Heart left ventricle (tissue), 16 donors: ENCODE measurements at regions of chr16 and their contacts with region 1.

Region 1: DNA sequence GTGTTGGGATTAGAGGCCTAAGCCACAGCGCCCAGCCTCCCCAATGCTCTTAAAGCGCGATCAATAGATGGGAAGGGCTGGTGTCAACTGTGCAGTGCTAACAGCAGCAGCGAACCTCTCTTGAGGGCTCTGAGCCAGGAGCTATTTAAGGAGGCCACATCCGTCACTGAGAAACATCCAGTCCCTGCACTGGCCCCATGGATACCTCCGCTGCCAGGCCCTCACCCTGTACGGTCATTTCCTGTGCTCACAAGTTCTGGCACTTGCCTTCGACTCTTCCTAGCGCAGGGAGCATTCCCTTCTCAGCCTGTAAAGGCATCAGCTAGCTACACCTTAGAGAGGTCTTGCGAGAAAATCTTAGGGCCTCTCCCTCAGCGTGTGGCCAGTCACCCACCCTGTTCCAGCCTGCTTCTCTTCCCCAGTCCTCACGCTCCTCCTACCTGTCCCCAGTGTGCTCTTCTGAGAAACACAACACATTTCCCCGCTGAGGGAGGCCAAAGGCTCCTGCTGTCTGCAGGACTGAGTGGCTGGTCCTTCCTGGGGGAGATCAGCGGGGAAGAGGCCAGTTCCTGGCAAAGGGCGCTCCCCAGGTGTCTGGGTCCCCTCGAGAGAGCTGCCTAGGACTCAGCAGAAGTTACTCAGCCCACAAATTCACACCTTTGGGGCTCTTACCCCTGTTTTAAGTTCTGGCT is 28.6 kb downstream of the GTF3C1 start:
- DNase-seq: peak; percentile 78 to 93 (median 87)
- ATAC-seq: peak; percentile 91 to 94 (median 93)
- H3K4me3 ChIP-seq: no peak overlapping the region
- H3K27ac ChIP-seq: peak overlapping the region; percentile 71 to 97 (median 94)
- H3K4me1 ChIP-seq: peaks cover 0 to 52% (median 27%) of the 10 kb centered on the region in 12 donors
- H3K27me3 ChIP-seq: no peaks in the 10 kb centered on the region
- CTCF ChIP-seq: no peak
- POLR2A ChIP-seq: peak in 1 of 2 donors; percentile 80

Region 2: GRCh38 chr16:27495191-27495590 is 25.9 kb before region 1 on chr16:
- intact Hi-C with region 1: no loop called
- DNase-seq: peak in 1 of 5 donors; percentile 45
- ATAC-seq: no peak
- H3K4me3 ChIP-seq: no peak overlapping the region
- H3K27ac ChIP-seq: no peak overlapping the region
- H3K4me1 ChIP-seq: peaks cover 0 to 21% (median 4%) of the 10 kb centered on the region in 12 donors
- H3K27me3 ChIP-seq: no peaks in the 10 kb centered on the region
- CTCF ChIP-seq: no peak
- POLR2A ChIP-seq: no peak

Region 3: DNA sequence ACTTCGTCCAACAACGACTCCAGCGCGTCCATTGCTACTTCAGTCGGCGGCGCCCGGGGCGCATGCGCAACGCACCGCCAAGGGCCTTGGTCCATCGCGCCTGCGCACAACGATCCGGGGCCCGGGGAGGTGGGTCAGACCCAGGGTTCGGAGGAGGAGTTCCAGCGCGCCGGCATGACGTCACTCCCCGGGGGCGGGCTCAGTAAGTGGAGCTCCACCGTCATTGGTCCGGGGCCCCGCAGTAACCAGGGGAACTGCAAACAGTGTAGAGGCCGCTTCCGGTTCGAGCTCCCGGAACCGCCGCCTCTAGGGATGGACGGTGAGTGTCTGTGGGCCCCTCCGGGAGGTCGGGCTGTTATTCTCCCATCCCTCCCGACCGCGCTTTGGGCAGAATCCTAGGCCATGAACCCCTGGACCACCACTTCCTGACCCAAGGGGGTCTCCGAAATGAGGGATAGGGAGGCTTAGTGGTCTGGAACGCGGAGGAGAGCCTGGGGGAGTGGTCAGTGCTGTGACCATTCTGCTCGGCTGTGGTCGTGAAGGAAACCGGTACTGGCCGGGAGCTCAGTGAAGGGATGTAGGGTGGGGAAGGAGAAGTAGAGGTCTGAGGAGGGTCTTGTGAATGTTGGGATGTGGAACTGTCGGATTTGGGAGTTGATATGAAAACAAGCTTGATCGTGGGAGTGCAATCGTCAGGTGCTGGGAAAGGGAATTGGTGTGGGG is 28.9 kb after region 1 on chr16 and contains the starts of genes GTF3C1 and KATNIP:
- intact Hi-C with region 1: loop called in 1 of 10 experiments (anchors 1 kb)
- DNase-seq: peak; percentile 100
- ATAC-seq: peak; percentile 97 to 100 (median 99)
- H3K4me3 ChIP-seq: peak within 1 kb of the TSS; percentile 61 to 97 (median 82)
- H3K27ac ChIP-seq: peak within 1 kb of the TSS; percentile 48 to 90 (median 83)
- H3K4me1 ChIP-seq: peaks cover 4 to 44% (median 36%) of the 10 kb centered on the region in 12 donors
- H3K27me3 ChIP-seq: no peaks in the 10 kb centered on the region
- CTCF ChIP-seq: no peak
- POLR2A ChIP-seq: peak in 1 of 2 donors; percentile 81
- total RNA-seq, gene GTF3C1: 48.1 to 76.4 (median 69.5) TPM
- total RNA-seq, gene KATNIP: 9.7 to 26.3 (median 18.8) TPM